ENCODE measurements at regions of chr4 and their contacts with region 1.

Region 1: DNA sequence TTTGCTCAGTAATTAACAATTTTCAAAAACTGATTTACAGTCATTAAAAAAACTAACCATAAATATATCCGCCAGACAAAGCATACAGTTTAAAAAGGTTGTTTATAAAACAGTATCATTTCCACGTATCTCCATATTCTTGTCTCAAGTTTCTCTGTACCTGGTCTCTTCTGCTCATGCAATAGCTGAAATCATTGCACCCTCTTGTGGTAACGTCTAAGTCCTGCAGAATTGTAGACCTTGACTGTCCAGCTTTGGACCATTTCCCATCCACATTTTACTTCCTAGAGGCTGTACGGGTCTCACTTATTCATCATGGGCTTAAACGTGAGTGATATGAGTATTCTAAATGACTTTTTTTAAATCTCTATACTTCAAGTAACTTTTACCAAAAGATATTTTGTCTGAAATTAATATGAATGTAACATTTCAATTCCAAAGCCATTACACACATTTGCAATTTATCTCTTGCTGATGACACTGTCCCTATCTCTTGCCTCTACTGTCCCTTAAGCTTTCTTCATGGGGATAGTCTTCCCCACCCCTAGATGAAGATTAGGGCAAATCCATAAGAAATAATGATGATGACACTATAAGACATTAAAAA is 118.5 kb downstream of the BTC start:
- DNase-seq: peak in 4 of 5 donors; percentile 12 to 28 (median 20)
- H3K4me3 ChIP-seq: no peak overlapping the region
- H3K4me3 Mint-ChIP-seq: peak overlapping the region in 2 of 8 donors; percentile 2 to 5
- H3K27ac ChIP-seq: no peak overlapping the region
- H3K27ac Mint-ChIP-seq: no peak overlapping the region
- H3K4me1 ChIP-seq: no peaks in the 10 kb centered on the region
- H3K4me1 Mint-ChIP-seq: peaks cover 0 to 4% (median 3%) of the 10 kb centered on the region in 4 donors
- H3K27me3 ChIP-seq: no peaks in the 10 kb centered on the region
- H3K27me3 Mint-ChIP-seq: peaks cover 2 to 6% of the 10 kb centered on the region in 2 donors

Region 2: DNA sequence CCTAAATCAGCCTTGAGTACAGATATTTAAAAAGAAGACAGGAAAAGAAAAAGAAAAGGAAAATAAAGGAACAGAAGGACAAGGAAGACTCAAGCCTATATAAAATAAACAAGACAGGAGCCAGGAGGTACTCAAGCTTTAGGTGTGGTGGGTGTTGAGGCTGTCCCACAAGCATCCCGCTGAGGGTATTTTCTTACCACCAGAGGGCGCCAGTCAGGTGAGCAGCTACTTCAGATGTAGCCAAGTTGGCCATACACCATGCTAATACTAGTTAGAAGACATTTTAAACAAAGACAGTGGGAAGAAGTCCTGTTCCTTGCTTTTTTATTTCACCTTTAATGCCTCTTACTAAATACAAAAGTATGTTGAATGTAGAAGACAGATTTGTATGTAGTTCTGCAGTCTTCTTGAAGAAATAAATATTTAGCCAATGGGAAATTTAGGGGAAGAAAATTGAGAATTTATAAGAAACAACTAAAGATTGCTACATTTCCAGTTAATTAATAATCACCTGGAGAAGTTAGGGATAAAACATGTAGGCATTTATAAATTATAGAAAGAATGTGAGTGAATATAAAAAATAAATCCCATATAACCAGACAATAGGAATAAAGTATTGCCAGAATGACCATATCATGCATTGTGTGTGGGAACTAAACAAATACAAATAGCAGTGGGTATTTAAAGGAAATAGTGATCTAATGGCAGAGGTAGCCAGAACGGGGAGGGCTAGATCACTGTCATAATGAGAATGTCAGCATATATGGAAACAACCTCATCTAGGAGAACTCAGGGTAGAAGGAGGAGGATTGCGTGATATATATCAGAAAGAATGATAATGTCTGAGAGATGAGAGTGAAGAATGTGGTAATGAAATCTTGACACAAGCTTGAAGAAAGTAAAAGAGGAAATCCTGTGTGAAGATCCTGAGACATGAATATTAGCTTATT is 446.8 kb before region 1 on chr4:
- CTCF ChIA-PET with region 1: interaction called, 8 read pairs
- POLR2A ChIA-PET with region 1: no interaction called
- intact Hi-C with region 1: loop called (anchors 1 kb)
- DNase-seq: peak; percentile 58 to 68 (median 63)
- H3K4me3 ChIP-seq: no peak overlapping the region
- H3K4me3 Mint-ChIP-seq: no peak overlapping the region
- H3K27ac ChIP-seq: no peak overlapping the region
- H3K27ac Mint-ChIP-seq: no peak overlapping the region
- H3K4me1 ChIP-seq: no peaks in the 10 kb centered on the region
- H3K4me1 Mint-ChIP-seq: no peaks in the 10 kb centered on the region
- H3K27me3 ChIP-seq: no peaks in the 10 kb centered on the region
- H3K27me3 Mint-ChIP-seq: no peaks in the 10 kb centered on the region

Region 3: GRCh38 chr4:74370912-74371311 is 304.9 kb before region 1 on chr4:
- CTCF ChIA-PET with region 1: interaction called, 5 read pairs
- POLR2A ChIA-PET with region 1: no interaction called
- intact Hi-C with region 1: loop called (anchors 1 kb)
- DNase-seq: peak; percentile 13 to 50 (median 18)
- H3K4me3 ChIP-seq: no peak overlapping the region
- H3K4me3 Mint-ChIP-seq: no peak overlapping the region
- H3K27ac ChIP-seq: no peak overlapping the region
- H3K27ac Mint-ChIP-seq: no peak overlapping the region
- H3K4me1 ChIP-seq: no peaks in the 10 kb centered on the region
- H3K4me1 Mint-ChIP-seq: no peaks in the 10 kb centered on the region
- H3K27me3 ChIP-seq: peaks cover under 1% of the 10 kb centered on the region
- H3K27me3 Mint-ChIP-seq: peaks cover 13 to 20% of the 10 kb centered on the region in 2 donors

Region 4: DNA sequence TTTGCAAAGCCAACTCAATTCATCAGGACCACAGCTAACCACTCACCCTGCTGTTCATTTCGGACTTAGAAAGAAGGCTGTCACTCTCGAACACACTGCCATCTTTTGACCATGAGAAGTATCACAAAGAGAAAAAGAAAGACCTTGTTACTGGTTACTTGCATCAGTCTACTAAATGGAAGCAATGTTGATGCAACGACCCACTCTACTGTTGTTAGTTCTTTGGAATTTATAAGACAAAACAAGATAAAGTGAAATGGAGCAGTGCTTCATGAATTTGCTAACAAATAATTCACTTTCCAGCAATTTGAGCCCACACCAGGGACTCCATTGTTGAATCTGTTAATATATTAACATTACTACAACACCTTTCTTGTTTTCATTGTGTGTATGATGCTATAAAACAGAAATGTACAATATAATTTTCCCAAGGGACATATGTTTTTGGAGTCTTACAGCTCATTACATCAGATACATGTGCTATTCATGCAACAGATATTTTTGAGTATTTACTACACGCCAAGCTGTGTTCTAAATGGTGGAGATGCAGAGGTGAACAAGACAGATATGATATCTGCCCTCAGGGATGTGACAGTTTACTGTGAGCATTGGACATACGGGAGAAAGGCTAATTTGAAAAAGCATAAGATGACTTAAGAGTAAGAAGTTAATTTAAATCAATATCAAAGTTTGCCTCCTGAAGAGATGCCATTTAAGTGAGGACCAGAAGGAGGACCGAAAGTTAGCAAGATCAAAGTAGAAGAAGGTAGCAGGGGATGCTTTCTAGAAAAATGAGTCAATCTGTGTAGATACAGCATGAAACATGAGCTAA is 143.6 kb before region 1 on chr4:
- CTCF ChIA-PET with region 1: interaction called, 5 read pairs
- POLR2A ChIA-PET with region 1: no interaction called
- intact Hi-C with region 1: loop called (anchors 5 kb)
- DNase-seq: peak in 4 of 5 donors; percentile 4 to 22 (median 16)
- H3K4me3 ChIP-seq: no peak overlapping the region
- H3K4me3 Mint-ChIP-seq: no peak overlapping the region
- H3K27ac ChIP-seq: no peak overlapping the region
- H3K27ac Mint-ChIP-seq: peak overlapping the region in 1 of 7 donors; percentile 49
- H3K4me1 ChIP-seq: no peaks in the 10 kb centered on the region
- H3K4me1 Mint-ChIP-seq: no peaks in the 10 kb centered on the region
- H3K27me3 ChIP-seq: no peaks in the 10 kb centered on the region
- H3K27me3 Mint-ChIP-seq: peaks cover 4 to 7% of the 10 kb centered on the region in 2 donors

Region 5: DNA sequence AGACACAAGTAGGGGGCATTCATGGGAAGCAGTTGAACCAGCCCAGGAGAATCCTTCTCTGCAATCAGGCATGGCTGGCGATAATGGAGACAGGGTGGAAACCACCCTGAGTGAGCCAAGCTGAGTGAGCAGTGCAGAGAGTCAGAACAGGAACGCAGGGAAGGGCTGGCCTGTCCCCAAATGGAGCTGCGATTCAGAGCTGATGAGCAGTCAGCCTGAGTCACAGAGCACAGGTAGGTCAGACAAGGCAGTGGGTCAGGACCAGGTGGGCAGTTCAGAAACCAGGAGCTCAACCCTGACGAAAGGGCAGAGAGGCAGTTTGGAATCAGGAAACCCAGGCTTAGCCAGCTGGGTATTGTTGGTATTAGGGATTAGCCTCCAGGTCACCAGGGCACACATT is 10.4 kb before region 1 on chr4:
- CTCF ChIA-PET with region 1: interaction called, 14 read pairs
- POLR2A ChIA-PET with region 1: no interaction called
- intact Hi-C with region 1: no loop called
- DNase-seq: no peak
- H3K4me3 ChIP-seq: no peak overlapping the region
- H3K4me3 Mint-ChIP-seq: no peak overlapping the region
- H3K27ac ChIP-seq: no peak overlapping the region
- H3K27ac Mint-ChIP-seq: no peak overlapping the region
- H3K4me1 ChIP-seq: no peaks in the 10 kb centered on the region
- H3K4me1 Mint-ChIP-seq: no peaks in the 10 kb centered on the region
- H3K27me3 ChIP-seq: no peaks in the 10 kb centered on the region
- H3K27me3 Mint-ChIP-seq: peaks cover 0 to 9% of the 10 kb centered on the region in 2 donors

Region 6: GRCh38 chr4:74944328-74944793 is 268.6 kb after region 1 on chr4:
- CTCF ChIA-PET with region 1: no interaction called
- POLR2A ChIA-PET with region 1: no interaction called
- intact Hi-C with region 1: no loop called
- DNase-seq: no peak
- H3K4me3 ChIP-seq: no peak overlapping the region
- H3K4me3 Mint-ChIP-seq: no peak overlapping the region
- H3K27ac ChIP-seq: no peak overlapping the region
- H3K27ac Mint-ChIP-seq: no peak overlapping the region
- H3K4me1 ChIP-seq: no peaks in the 10 kb centered on the region
- H3K4me1 Mint-ChIP-seq: no peaks in the 10 kb centered on the region
- H3K27me3 ChIP-seq: no peaks in the 10 kb centered on the region
- H3K27me3 Mint-ChIP-seq: peaks cover 0 to 2% of the 10 kb centered on the region in 2 donors